ENCODE measurements at regions of chr18 and their contacts with region 1.

Region 1: GRCh38 chr18:21704603-21705364 is at the start of gene ABHD3:
- DNase-seq: peak; percentile 96
- H3K4me3 ChIP-seq: peak within 1 kb of the TSS; percentile 77 to 97 (median 80)
- H3K27ac ChIP-seq: peak within 1 kb of the TSS; percentile 89 to 97 (median 94)
- H3K4me1 ChIP-seq: peaks cover 0 to 18% (median 12%) of the 10 kb centered on the region in 4 donors
- H3K27me3 ChIP-seq: no peaks in the 10 kb centered on the region
- CTCF ChIP-seq: peak; percentile 59 to 86 (median 72)
- EP300 ChIP-seq: no peak
- POLR2A ChIP-seq: peak; percentile 40 to 56
- total RNA-seq, gene ABHD3: 7.2 to 11.7 (median 9.0) TPM

Region 2: GRCh38 chr18:21369146-21369545 is 335.6 kb before region 1 on chr18:
- intact Hi-C with region 1: no loop called
- DNase-seq: no peak
- H3K4me3 ChIP-seq: no peak overlapping the region
- H3K27ac ChIP-seq: no peak overlapping the region
- H3K4me1 ChIP-seq: no peaks in the 10 kb centered on the region
- H3K27me3 ChIP-seq: no peaks in the 10 kb centered on the region
- CTCF ChIP-seq: no peak
- EP300 ChIP-seq: no peak
- POLR2A ChIP-seq: no peak

Region 3: DNA sequence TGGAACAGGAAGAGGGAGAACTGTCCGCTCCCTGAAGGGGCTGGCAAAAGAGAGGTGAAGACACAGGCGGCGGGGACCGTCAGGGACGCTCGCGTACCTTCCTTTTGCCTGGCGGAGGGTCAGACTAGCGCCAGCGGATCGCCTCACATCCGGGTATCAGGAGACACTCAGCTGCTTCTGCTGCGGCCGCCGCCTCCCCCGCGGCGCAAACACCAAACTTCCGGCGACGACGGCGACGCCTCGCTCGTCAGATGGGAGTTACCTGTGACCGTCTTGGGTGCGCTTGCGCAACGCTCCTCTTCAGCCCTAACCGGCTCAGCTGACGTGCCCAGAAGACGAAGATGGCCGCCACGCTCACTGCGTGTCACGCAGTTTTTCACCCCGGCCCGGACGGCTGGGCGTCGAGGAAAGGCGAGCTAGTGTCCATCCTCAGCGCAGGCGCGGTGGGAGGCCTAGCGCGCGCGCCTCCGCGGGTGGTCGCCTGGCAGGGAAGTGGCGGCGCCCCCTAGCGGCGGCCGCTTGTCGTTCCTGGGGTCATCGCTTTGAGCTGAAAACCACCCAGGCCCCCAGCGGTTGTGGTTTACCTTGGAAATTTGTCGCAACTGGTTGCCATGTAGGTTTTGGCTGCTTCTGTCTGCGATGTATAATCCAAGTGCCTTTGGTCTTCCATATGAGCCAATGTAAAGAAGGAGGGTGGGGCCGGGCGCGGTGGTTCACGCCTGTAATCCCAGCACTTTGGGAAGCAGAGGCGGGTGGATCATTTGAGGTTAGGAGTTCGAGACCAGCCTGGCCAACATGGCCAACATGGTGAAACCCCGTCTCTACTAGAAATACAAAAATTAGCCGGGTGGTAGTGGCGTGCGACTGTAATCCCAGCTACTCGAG is 104.0 kb before region 1 on chr18 and contains the start of gene ESCO1:
- intact Hi-C with region 1: loop called (anchors 2 kb)
- DNase-seq: peak; percentile 99
- H3K4me3 ChIP-seq: peak within 1 kb of the TSS; percentile 71 to 97 (median 78)
- H3K27ac ChIP-seq: peak within 1 kb of the TSS; percentile 91 to 97 (median 94)
- H3K4me1 ChIP-seq: peaks cover 0 to 23% (median 14%) of the 10 kb centered on the region in 4 donors
- H3K27me3 ChIP-seq: no peaks in the 10 kb centered on the region
- CTCF ChIP-seq: peak; percentile 96 to 98 (median 97)
- EP300 ChIP-seq: peak in 2 of 4 donors; percentile 54 to 65
- POLR2A ChIP-seq: peak; percentile 78 to 83
- total RNA-seq, gene ESCO1: 12.8 to 20.0 (median 18.9) TPM

Region 4: DNA sequence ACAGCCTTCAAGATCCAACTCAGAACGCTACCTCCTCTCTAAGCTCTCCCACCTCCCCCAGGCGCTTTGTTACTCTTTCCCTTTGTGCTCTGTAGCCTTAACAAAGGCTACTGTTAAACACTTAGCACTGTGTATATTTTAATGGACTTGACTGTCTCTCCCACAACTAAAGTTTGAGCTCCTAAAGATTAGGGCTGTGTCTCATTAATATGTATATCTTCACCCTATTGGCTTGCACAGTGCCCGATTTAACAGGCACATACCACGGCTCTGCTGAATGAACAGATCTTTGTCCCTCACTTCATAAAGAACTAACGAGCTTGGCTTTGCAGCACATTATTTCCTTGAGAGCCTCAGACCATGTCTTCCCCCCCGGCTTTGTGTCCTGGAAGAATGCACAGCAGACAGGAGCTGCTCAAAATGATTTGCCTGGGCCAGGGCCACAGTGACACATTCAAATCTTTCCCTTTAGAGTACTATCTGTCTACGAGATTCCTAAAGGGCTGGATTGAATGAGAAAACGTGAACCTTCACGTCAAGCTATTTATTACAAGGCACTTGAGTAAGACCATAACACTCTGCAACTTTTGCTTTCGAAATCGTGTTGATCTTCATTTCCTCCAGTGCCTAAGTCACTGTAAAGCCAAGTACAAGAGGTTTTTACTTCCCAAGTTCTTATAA is 22.3 kb before region 1 on chr18:
- intact Hi-C with region 1: loop called (anchors 2 kb)
- DNase-seq: no peak
- H3K4me3 ChIP-seq: peak overlapping the region; percentile 22 to 51 (median 44)
- H3K27ac ChIP-seq: peak overlapping the region; percentile 23 to 74 (median 72)
- H3K4me1 ChIP-seq: peaks cover 0 to 18% (median 14%) of the 10 kb centered on the region in 4 donors
- H3K27me3 ChIP-seq: no peaks in the 10 kb centered on the region
- CTCF ChIP-seq: no peak
- EP300 ChIP-seq: no peak
- POLR2A ChIP-seq: no peak

Region 5: DNA sequence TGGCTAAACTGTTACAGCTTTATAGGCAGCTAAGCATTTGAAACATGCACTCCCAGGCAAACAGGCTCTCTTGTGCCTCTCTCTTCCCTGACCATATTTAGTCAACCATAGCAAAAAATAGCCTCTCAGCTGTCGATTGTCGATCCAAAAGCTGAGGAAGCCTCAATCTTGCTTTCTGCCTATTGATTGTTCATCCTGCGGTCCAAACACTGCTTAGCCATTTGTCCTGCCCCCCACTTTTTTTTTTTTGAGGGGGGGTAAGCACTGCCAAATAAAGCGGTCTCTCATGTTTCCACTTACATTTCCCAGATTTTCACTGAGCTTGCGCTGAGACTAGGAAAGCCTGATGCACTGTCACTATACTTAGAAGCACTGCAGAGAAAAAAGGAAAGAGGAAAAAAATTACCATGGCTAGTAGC is 126.6 kb after region 1 on chr18:
- intact Hi-C with region 1: loop called (anchors 5 kb)
- DNase-seq: no peak
- H3K4me3 ChIP-seq: peak overlapping the region; percentile 21 to 47 (median 37)
- H3K27ac ChIP-seq: peak overlapping the region; percentile 73 to 81 (median 74)
- H3K4me1 ChIP-seq: peaks cover 0 to 62% (median 28%) of the 10 kb centered on the region in 4 donors
- H3K27me3 ChIP-seq: no peaks in the 10 kb centered on the region
- CTCF ChIP-seq: no peak
- EP300 ChIP-seq: no peak
- POLR2A ChIP-seq: no peak

Region 6: DNA sequence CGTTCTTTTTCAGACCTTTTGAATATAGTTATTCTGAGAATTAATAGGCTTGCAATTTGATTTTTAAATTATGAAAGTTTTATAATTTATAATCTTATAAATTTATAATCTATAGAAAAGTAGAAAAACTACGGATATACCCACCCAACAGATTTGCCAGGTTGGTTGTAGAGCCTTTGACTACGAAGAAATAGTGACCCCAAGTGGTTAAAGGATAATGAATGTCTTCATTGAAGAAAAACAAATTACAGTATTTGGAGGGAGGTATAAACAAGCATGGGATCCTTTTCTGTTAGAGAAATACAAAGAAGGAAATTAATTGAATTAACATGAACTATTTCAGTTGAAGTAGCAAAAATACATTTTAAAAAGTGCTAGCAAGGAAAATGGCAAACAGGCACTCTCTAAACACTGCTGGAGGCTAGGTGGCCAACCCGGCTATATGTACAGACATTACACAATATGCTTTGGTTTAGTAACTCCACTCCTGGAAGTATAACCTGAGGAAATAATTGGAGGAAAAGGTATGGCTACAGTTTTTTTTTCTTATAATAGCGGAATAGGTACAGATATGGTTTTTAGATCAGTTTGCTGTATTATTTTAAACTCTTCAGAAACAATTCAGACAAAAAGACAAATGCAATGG is 146.7 kb after region 1 on chr18:
- intact Hi-C with region 1: loop called (anchors 5 kb)
- DNase-seq: no peak
- H3K4me3 ChIP-seq: peak overlapping the region in 2 of 4 donors; percentile 3 to 17
- H3K27ac ChIP-seq: no peak overlapping the region
- H3K4me1 ChIP-seq: peaks cover 0 to 5% (median 0%) of the 10 kb centered on the region in 4 donors
- H3K27me3 ChIP-seq: no peaks in the 10 kb centered on the region
- CTCF ChIP-seq: peak in 2 of 4 experiments; percentile 8 to 38
- EP300 ChIP-seq: no peak
- POLR2A ChIP-seq: no peak

Region 7: DNA sequence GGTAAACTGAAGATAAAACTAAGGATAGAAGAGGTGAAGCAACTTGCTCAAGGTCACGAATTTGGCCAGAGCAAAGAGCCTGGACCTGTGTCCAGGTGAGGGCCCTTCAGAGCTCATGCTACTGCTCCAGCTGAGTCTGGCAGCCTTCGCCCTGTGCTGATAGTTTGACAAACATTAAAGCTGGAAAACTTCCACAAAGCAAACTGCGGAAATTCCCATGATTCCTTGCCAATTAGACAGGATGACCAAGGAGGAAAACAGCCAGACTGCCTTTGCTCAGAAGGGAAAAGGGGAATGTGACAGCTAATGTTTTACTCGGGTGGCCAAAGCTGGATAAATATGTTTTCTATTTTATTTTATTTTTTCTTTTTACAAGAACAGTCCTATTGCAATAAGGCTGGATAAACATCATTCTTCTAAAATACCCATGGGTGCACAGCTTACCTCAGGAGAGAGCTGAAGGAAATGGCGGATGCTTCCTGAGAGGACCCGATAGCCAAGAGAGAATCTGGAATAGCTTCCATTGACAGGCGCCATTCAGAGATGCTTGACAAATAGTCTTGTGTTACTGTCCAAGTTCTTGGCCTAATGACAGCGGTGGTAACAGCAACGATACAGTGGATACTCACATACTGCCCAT is 718.2 kb after region 1 on chr18:
- intact Hi-C with region 1: no loop called
- DNase-seq: no peak
- H3K4me3 ChIP-seq: no peak overlapping the region
- H3K27ac ChIP-seq: no peak overlapping the region
- H3K4me1 ChIP-seq: peaks cover 0 to 8% (median 3%) of the 10 kb centered on the region in 4 donors
- H3K27me3 ChIP-seq: no peaks in the 10 kb centered on the region
- CTCF ChIP-seq: no peak
- EP300 ChIP-seq: no peak
- POLR2A ChIP-seq: no peak